CD14-positive monocyte (primary cell): ENCODE measurements at regions of chr19 and their contacts with region 1.

Region 1: DNA sequence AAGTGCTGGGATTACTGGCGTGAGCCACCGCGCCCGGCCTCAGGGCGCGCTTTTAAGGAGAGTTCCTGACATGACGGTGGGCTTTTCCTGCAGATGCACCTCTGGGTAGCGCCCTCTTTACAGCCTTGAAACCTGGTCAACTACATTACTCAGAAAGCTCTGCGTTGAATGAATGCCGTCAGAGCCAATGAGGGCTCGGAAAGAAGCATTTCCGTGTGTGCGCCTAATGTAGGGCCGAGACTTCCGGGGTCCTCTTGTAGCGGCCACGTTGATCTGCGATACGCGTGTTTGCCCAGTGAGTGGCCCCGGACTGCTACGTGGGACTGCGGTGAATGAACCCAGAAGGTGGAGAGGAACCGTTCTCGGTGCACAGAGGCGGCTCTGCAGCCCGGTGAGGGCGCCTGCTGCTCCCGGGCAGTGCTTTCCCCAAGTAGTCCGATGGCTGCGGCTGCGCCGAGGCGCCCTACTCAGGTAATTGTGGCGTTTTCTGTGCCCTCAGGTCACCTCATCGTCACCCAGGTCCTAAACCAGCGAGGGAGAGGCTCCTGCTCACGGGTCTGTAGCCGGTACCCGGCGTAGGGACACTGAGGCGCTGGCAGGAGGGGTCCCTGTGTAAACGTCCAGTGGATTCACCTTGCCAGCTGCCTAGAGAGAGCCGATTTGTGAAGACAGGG is 4.9 kb upstream of the ZNF552 start:
- DNase-seq: peak; percentile 84 to 88 (median 87)
- H3K4me3 ChIP-seq: peak overlapping the region; percentile 65 to 96 (median 89)
- H3K4me3 Mint-ChIP-seq: peak overlapping the region; percentile 95 to 98
- H3K27ac ChIP-seq: peak overlapping the region; percentile 67 to 85
- H3K27ac Mint-ChIP-seq: peak overlapping the region; percentile 90 to 97 (median 95)
- H3K4me1 ChIP-seq: peaks cover 18 to 29% of the 10 kb centered on the region in 2 donors
- H3K4me1 Mint-ChIP-seq: peaks cover 30% of the 10 kb centered on the region
- H3K27me3 ChIP-seq: no peaks in the 10 kb centered on the region
- H3K27me3 Mint-ChIP-seq: peaks cover 0 to 5% (median 0%) of the 10 kb centered on the region in 3 donors
- CTCF ChIP-seq: no peak

Region 2: GRCh38 chr19:57769345-57770131 is 50.1 kb before region 1 on chr19 and contains the start of gene ZNF586:
- intact Hi-C with region 1: loop called (anchors 2 to 5 kb)
- DNase-seq: peak; percentile 90 to 95 (median 90)
- H3K4me3 ChIP-seq: peak within 1 kb of the TSS; percentile 64 to 82 (median 77)
- H3K4me3 Mint-ChIP-seq: peak within 1 kb of the TSS; percentile 88 to 93
- H3K27ac ChIP-seq: peak within 1 kb of the TSS; percentile 66 to 77
- H3K27ac Mint-ChIP-seq: peak within 1 kb of the TSS; percentile 70 to 93 (median 89)
- H3K4me1 ChIP-seq: peaks cover 11 to 18% of the 10 kb centered on the region in 2 donors
- H3K4me1 Mint-ChIP-seq: peaks cover 27% of the 10 kb centered on the region
- H3K27me3 ChIP-seq: no peaks in the 10 kb centered on the region
- H3K27me3 Mint-ChIP-seq: peaks cover 0 to 1% (median 0%) of the 10 kb centered on the region in 3 donors
- CTCF ChIP-seq: no peak
- polyA plus RNA-seq, gene ZNF586: 7.7 to 10.5 (median 10.2) TPM

Region 3: DNA sequence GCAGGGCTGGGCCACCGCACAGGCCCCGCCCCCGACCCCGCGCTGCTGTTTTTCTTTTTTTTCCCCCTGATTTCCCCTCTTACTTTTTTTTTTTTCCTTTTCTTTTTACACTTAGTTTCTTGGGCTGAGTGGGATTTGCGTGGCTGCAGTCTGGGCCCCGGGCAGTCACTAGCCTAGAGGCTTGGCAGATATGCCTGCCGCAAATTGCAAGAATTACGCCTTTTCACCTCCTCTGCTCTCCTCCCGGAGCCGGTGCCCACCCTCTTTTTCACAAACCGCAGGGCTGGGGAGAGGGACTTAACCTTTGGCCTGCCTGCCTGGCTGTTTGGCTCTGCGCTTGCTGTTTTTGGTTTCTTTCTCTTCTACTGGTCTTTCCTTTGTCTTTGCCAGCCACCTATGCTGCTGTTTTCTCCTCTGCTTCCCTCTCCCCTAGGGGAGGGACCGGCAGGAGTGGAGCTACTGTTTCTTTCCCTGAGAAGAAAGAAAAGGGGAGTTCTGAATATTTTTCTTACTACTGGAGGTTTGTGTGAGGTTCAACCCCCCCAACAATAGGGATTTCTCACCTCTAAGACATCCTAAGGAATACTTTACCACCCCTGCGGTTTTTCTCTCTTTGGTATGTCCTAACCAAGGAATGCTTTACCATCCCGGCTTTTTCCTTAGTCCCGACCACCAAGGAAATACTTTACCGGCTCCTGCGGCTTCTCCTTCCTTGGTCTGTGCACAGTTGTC is 15.9 kb before region 1 on chr19:
- intact Hi-C with region 1: no loop called
- DNase-seq: no peak
- H3K4me3 ChIP-seq: peak overlapping the region; percentile 36 to 80 (median 57)
- H3K4me3 Mint-ChIP-seq: peak overlapping the region; percentile 90 to 99
- H3K27ac ChIP-seq: peak overlapping the region; percentile 38 to 41
- H3K27ac Mint-ChIP-seq: peak overlapping the region in 5 of 7 donors; percentile 12 to 89 (median 76)
- H3K4me1 ChIP-seq: peaks cover 22 to 27% of the 10 kb centered on the region in 2 donors
- H3K4me1 Mint-ChIP-seq: peaks cover 53% of the 10 kb centered on the region
- H3K27me3 ChIP-seq: no peaks in the 10 kb centered on the region
- H3K27me3 Mint-ChIP-seq: peaks cover 0 to 6% (median 0%) of the 10 kb centered on the region in 3 donors
- CTCF ChIP-seq: no peak

Region 4: DNA sequence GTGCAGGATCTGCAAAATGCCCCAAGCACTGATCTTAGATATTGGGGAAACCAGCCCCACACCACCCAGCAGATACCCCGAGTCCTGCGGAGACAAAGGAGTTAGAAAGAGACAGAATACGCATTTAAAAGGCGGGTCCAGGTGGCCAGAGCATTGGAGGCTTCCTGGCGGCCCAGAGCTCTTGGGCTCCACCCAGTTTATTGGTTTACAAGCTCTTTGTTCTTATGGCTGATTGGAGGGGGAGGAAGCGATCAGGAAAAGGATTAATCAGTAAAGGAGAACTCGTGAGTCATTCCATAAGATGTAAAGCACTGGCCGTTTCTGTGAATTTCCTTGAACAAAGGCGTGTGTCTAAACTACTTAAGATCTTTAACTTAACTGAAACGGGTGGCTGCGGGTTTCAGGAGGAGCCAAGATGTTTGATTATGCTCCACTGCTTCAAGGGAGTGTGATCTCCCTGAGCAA is 31.0 kb after region 1 on chr19:
- intact Hi-C with region 1: loop called in 1 of 2 experiments (anchors 1 kb)
- DNase-seq: no peak
- H3K4me3 ChIP-seq: peak overlapping the region; percentile 80 to 93 (median 88)
- H3K4me3 Mint-ChIP-seq: peak overlapping the region; percentile 92 to 95
- H3K27ac ChIP-seq: peak overlapping the region in 1 of 2 donors; percentile 82
- H3K27ac Mint-ChIP-seq: peak overlapping the region; percentile 92 to 98 (median 95)
- H3K4me1 ChIP-seq: peaks cover 9 to 14% of the 10 kb centered on the region in 2 donors
- H3K4me1 Mint-ChIP-seq: peaks cover 24% of the 10 kb centered on the region
- H3K27me3 ChIP-seq: no peaks in the 10 kb centered on the region
- H3K27me3 Mint-ChIP-seq: no peaks in the 10 kb centered on the region
- CTCF ChIP-seq: no peak

Region 5: DNA sequence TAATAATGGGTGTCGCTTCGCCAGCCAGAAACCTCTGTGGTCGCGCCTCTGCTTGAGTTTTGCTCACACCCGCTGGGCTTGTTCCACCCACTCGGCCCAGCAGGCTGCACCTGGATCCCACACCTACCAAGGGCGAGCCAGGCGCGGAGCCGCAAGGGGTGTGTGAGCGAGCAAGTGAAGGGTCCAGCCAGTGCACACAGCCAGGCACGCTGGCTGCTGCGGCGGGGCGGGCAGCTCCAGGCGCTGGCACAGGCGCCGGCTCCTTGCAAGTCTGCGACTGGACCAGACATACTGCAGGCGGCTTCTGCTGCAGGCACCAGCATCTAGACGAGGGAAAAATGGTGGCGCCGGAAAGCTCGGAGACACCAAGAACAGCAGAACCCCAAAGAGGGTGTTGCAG is 129.7 kb after region 1 on chr19:
- intact Hi-C with region 1: no loop called
- DNase-seq: no peak
- H3K4me3 ChIP-seq: peak overlapping the region in 1 of 3 experiments; percentile 17
- H3K4me3 Mint-ChIP-seq: no peak overlapping the region
- H3K27ac ChIP-seq: no peak overlapping the region
- H3K27ac Mint-ChIP-seq: no peak overlapping the region
- H3K4me1 ChIP-seq: peaks cover 12 to 19% of the 10 kb centered on the region in 2 donors
- H3K4me1 Mint-ChIP-seq: peaks cover 20% of the 10 kb centered on the region
- H3K27me3 ChIP-seq: no peaks in the 10 kb centered on the region
- H3K27me3 Mint-ChIP-seq: peaks cover 0 to 2% (median 0%) of the 10 kb centered on the region in 3 donors
- CTCF ChIP-seq: no peak

Region 6: DNA sequence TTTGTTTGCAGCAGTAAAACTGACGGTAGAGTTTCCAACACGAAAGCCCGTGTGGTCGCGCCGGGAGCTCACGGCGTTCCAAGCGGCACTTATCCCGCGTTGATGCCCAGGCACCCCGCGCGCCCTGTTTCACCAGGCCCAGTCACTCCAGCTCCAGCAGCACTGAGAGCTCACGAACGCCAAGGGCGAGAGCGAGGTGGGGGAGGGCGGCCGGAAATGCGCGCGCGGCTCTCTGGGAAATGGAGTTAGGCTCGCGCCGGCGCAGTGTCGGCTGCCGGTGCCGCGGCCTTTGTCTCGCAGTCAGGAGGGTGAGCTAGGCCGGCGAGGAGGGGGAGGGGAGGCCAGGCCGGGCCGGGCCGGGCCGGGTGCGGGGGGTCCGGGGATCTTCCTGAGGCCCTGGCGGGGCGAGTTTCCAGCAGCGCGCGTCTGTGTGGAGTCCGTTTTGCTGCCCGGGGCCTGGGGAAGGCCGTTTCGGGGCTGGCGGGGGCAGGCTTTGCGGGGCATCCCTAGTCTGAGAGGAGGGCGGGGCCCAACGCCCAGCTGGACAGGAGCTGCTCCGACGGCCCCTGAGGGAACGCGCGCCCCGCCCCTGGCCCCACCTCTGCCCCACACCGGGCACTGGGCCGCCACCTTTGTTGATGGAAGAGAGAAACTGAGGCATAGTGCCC is 239.5 kb after region 1 on chr19 and contains the start of gene ZNF135:
- intact Hi-C with region 1: no loop called
- DNase-seq: peak; percentile 20 to 39 (median 32)
- H3K4me3 ChIP-seq: peak within 1 kb of the TSS; percentile 12 to 74 (median 29)
- H3K4me3 Mint-ChIP-seq: peak within 1 kb of the TSS; percentile 80 to 82
- H3K27ac ChIP-seq: no peak within 1 kb of the TSS
- H3K27ac Mint-ChIP-seq: peak within 1 kb of the TSS in 1 of 7 donors; percentile 37
- H3K4me1 ChIP-seq: peaks cover 5 to 13% of the 10 kb centered on the region in 2 donors
- H3K4me1 Mint-ChIP-seq: peaks cover 12% of the 10 kb centered on the region
- H3K27me3 ChIP-seq: no peaks in the 10 kb centered on the region
- H3K27me3 Mint-ChIP-seq: peaks cover 6 to 10% (median 8%) of the 10 kb centered on the region in 3 donors
- CTCF ChIP-seq: no peak
- polyA plus RNA-seq, gene ZNF135: 0.32 to 0.37 TPM in 2 of 3 donors, not detected in the other